ENCODE measurements at regions of chr1 and their contacts with region 1.

Region 1: GRCh38 chr1:153572569-153573015 is 6.9 kb upstream of the S100A2 start:
- DNase-seq: peak; percentile 73
- ATAC-seq: peak; percentile 77
- H3K4me3 Mint-ChIP-seq: no peak overlapping the region
- H3K27ac Mint-ChIP-seq: no peak overlapping the region
- H3K4me1 Mint-ChIP-seq: peaks cover 17% of the 10 kb centered on the region
- H3K27me3 Mint-ChIP-seq: peaks cover 2% of the 10 kb centered on the region; the same call in 1 of the 2 replicates
- CTCF ChIP-seq: peak; percentile 30

Region 2: GRCh38 chr1:153352523-153352922 is 220.1 kb before region 1 on chr1:
- CTCF ChIA-PET with region 1: interaction called, 14 read pairs
- POLR2A ChIA-PET with region 1: no interaction called
- DNase-seq: peak; percentile 68
- ATAC-seq: peak; percentile 29
- H3K4me3 Mint-ChIP-seq: no peak overlapping the region
- H3K27ac Mint-ChIP-seq: no peak overlapping the region
- H3K4me1 Mint-ChIP-seq: peaks cover 6% of the 10 kb centered on the region; the same call in 1 of the 2 replicates
- H3K27me3 Mint-ChIP-seq: peaks cover 18% of the 10 kb centered on the region; the same call in 1 of the 2 replicates
- CTCF ChIP-seq: peak; percentile 76

Region 3: GRCh38 chr1:153520230-153520629 is 52.4 kb before region 1 on chr1:
- CTCF ChIA-PET with region 1: interaction called, 15 read pairs
- POLR2A ChIA-PET with region 1: no interaction called
- DNase-seq: no peak
- ATAC-seq: no peak
- H3K4me3 Mint-ChIP-seq: no peak overlapping the region; the same call in 1 of the 2 replicates
- H3K27ac Mint-ChIP-seq: no peak overlapping the region
- H3K4me1 Mint-ChIP-seq: peaks cover 22% of the 10 kb centered on the region
- H3K27me3 Mint-ChIP-seq: peaks cover 64% of the 10 kb centered on the region
- CTCF ChIP-seq: no peak

Region 4: DNA sequence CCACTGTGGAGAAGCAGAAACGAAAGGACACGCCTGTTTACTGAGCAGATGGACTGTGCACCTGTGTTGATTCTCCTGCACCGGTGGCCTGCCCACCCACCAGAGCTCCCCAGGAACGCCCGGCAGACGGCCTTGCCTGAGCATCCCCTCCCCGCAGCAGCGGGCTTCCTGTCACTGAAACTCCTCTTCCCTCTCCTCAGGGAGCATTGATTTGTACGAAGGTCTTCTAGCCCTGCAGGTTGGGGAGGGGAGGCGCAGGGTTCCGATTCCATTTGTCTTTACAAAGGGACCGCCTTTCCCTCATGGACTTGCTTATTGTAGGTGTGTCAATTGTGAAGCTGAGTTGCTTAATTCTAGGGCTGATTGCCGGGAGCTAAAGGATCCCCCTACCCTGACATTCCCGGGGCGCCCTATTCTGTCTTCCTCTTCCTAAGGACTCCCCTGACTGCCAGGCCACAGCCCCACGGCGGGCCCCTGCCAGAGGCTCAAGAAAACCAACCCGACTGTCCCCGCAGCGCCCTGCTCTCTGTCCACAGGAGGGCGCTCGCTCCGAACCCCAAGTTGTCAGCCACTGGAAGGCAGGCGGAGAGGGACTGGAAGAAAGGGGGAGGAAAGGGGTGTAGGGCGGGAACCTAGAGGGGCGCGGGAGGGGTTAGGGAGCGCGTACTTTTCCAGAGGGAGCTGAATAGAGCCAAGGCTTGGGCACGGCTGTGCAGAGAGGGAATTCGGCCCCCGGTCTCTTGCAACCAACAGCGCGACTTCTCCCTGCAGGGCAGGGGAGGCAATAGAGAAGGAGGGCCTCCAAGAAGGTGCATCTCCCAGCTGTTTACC is 39.6 kb before region 1 on chr1:
- CTCF ChIA-PET with region 1: interaction called, 188 read pairs
- POLR2A ChIA-PET with region 1: interaction called, 7 read pairs
- DNase-seq: peak; percentile 94
- ATAC-seq: peak; percentile 85
- H3K4me3 Mint-ChIP-seq: peak overlapping the region; percentile 63
- H3K27ac Mint-ChIP-seq: peak overlapping the region; percentile 85
- H3K4me1 Mint-ChIP-seq: peaks cover 44% of the 10 kb centered on the region
- H3K27me3 Mint-ChIP-seq: peaks cover 37% of the 10 kb centered on the region
- CTCF ChIP-seq: peak; percentile 72

Region 5: DNA sequence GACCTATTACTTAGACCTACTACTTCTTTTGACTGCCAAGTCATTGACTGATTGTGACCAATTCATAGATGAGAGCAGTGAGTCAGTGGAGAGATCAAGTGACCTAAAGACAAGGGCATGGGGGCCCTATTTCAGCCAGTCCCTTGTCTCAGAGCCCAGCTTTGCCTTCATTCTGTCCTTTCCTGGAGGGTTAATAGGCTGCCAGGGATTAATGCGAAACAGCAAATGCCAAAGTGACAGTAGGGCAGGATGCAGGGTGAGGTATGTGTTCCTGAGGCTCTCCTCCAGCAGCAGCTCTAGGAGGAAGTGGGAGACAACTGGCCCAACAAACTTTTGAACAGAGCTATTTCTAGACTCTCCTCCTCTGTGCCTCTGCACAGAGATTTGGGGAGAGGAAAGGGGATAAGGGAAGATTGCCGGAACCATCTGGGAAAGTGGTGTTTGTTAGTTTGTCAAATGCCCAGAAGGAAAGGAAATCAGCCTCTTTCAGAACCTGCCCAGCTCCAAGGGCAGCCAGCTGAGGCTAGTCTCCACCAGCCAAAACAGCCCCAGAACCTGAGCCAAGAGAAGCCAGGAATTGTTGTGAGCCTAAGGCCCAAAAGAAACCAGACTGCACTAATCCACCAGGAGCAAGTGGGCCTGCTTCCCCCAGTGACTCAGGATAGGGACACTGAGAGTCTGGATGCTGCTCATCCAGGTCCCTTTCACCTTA is 18.6 kb before region 1 on chr1:
- CTCF ChIA-PET with region 1: interaction called, 18 read pairs
- POLR2A ChIA-PET with region 1: interaction called, 3 read pairs
- DNase-seq: no peak
- ATAC-seq: no peak
- H3K4me3 Mint-ChIP-seq: no peak overlapping the region
- H3K27ac Mint-ChIP-seq: no peak overlapping the region
- H3K4me1 Mint-ChIP-seq: peaks cover 20% of the 10 kb centered on the region
- H3K27me3 Mint-ChIP-seq: no peaks in the 10 kb centered on the region; the same call in 1 of the 2 replicates
- CTCF ChIP-seq: no peak

Region 6: GRCh38 chr1:153617675-153618074 is 45.1 kb after region 1 on chr1:
- CTCF ChIA-PET with region 1: interaction called, 64 read pairs
- POLR2A ChIA-PET with region 1: interaction called, 5 read pairs
- DNase-seq: peak; percentile 62
- ATAC-seq: peak; percentile 68
- H3K4me3 Mint-ChIP-seq: no peak overlapping the region
- H3K27ac Mint-ChIP-seq: no peak overlapping the region
- H3K4me1 Mint-ChIP-seq: peaks cover 22% of the 10 kb centered on the region
- H3K27me3 Mint-ChIP-seq: no peaks in the 10 kb centered on the region
- CTCF ChIP-seq: peak; percentile 31

Region 7: DNA sequence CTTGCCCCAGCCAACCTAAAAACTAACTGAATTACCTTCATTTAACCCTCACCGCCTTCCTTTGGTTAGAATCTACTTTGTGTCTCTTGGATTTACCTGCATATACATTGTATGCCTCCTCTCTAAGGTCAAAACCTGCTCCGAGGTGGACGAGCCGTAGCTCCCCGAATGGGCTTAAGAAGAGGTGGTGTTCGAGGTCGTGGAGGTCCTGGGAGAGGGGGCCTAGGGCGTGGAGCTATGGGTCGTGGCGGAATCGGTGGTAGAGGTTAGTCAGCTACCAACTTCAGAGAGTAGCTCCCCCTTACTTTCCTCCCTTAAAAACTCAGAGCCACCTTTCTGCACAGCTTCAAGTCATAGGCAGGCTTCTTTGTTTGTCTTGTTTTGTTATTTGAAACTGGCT is 70.5 kb after region 1 on chr1:
- CTCF ChIA-PET with region 1: interaction called, 11 read pairs
- POLR2A ChIA-PET with region 1: interaction called, 3 read pairs
- DNase-seq: no peak
- ATAC-seq: no peak
- H3K4me3 Mint-ChIP-seq: no peak overlapping the region
- H3K27ac Mint-ChIP-seq: no peak overlapping the region
- H3K4me1 Mint-ChIP-seq: peaks cover 8% of the 10 kb centered on the region
- H3K27me3 Mint-ChIP-seq: no peaks in the 10 kb centered on the region
- CTCF ChIP-seq: no peak